ENCODE measurements at regions of chr4 and their contacts with region 1.

Region 1: GRCh38 chr4:114386637-114387233 is 211.9 kb upstream of the UGT8 start:
- DNase-seq: no peak
- H3K4me3 ChIP-seq: no peak overlapping the region
- H3K27me3 ChIP-seq: peaks cover 12% of the 10 kb centered on the region
- CTCF ChIP-seq: peak; percentile 59

Region 2: GRCh38 chr4:114401483-114401882 is 14.7 kb after region 1 on chr4:
- CTCF ChIA-PET with region 1: no interaction called
- POLR2A ChIA-PET with region 1: no interaction called
- DNase-seq: no peak
- H3K4me3 ChIP-seq: no peak overlapping the region
- H3K27me3 ChIP-seq: peaks cover 2% of the 10 kb centered on the region
- CTCF ChIP-seq: no peak

Region 3: GRCh38 chr4:114659386-114660008 is 272.8 kb after region 1 on chr4:
- CTCF ChIA-PET with region 1: interaction called, 23 read pairs
- POLR2A ChIA-PET with region 1: no interaction called
- DNase-seq: no peak
- H3K4me3 ChIP-seq: no peak overlapping the region
- H3K27me3 ChIP-seq: no peaks in the 10 kb centered on the region
- CTCF ChIP-seq: peak; percentile 89

Region 4: DNA sequence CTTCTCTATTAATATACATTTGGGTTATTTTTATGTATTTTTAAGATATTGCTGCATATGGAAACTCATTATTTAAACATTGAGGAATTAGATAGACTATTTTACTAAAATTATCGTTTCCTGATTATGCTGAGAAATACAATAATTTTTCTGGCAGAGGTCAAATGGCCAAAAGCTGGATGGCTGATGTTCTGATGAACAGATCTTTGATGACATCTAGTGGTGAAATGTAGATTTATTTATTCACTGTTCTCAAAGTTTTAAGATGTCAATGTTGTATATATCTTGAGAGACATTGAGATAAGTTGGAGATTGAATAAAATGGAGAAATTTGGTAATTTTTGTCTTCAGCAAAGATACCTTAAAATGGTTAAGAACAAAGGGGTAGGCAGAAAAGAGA is 308.0 kb after region 1 on chr4:
- CTCF ChIA-PET with region 1: interaction called, 21 read pairs
- POLR2A ChIA-PET with region 1: no interaction called
- DNase-seq: peak; percentile 2
- H3K4me3 ChIP-seq: no peak overlapping the region
- H3K27me3 ChIP-seq: no peaks in the 10 kb centered on the region
- CTCF ChIP-seq: peak; percentile 44

Measured in BJ (cell line).